ENCODE measurements at regions of chr11 and their contacts with region 1.

Region 1: DNA sequence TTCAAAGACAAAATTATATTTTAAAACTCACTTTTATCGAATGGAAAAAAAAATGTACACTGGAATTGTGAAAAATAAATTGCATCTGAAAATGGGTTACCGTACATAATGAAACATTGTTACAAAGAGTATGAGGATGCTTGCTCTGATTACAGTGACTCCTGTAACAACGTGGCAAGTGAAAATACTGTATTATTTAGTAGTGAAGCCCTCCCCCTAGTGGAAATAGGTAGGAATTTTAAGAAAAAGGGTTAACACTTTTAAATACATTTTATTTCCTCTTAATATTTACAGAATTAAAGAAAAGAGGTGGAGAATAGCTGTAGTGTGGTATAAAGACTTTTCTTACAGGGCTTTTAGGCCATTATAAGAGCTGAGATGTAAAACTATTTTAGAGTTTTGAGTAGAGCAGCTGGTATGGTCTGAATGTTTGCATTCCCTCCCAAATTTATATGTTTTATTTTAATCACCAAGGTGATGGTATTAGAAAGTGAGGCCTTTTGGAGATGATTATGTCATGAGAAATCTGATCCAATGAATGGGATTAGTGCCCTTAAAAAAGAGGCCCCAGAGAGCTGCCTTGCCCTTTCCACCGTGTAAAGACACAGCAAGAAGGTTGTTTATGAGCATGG is 25.2 kb downstream of the FAM76B start:
- DNase-seq: peak; percentile 54 to 65 (median 60)
- ATAC-seq: peak; percentile 81
- H3K4me3 ChIP-seq: no peak overlapping the region
- H3K27ac ChIP-seq: no peak overlapping the region
- H3K4me1 ChIP-seq: no peaks in the 10 kb centered on the region
- H3K27me3 ChIP-seq: no peaks in the 10 kb centered on the region
- CTCF ChIP-seq: peak; percentile 38 to 78 (median 54); a peak in 4 of 6 replicates
- EP300 ChIP-seq: no peak
- POLR2A ChIP-seq: no peak
- RAD21 ChIP-seq: peak; percentile 93 to 96

Region 2: DNA sequence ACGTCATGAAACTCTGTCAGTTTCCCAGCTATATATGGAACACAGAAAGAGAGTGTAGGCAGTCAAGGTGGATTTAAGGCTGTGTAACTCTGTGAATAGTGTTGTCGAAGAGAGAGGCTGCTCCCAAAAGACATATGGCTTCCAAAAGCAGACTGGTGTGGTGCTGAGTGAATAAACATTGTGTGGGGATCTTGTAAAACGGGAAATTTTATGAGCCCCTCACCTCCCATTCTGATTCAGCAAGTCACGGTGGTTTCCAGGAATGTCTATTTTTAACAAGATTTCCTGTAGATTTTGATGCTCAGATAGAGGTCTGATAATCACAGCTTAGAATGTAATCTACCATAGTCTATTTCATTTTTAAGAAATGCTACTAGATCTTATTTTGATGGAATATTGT is 601.3 kb before region 1 on chr11:
- CTCF ChIA-PET with region 1: no interaction called
- POLR2A ChIA-PET with region 1: no interaction called
- in situ Hi-C with region 1: loop called (anchors 5 kb)
- intact Hi-C with region 1: no loop called
- DNase-seq: no peak
- ATAC-seq: no peak
- H3K4me3 ChIP-seq: no peak overlapping the region
- H3K27ac ChIP-seq: no peak overlapping the region
- H3K4me1 ChIP-seq: no peaks in the 10 kb centered on the region
- H3K27me3 ChIP-seq: no peaks in the 10 kb centered on the region
- CTCF ChIP-seq: no peak
- EP300 ChIP-seq: no peak
- POLR2A ChIP-seq: no peak
- RAD21 ChIP-seq: no peak

Region 3: GRCh38 chr11:95364324-95365295 is 399.8 kb before region 1 on chr11:
- CTCF ChIA-PET with region 1: no interaction called
- POLR2A ChIA-PET with region 1: no interaction called
- in situ Hi-C with region 1: no loop called
- intact Hi-C with region 1: loop called (anchors 10 kb)
- DNase-seq: no peak
- ATAC-seq: no peak
- H3K4me3 ChIP-seq: no peak overlapping the region
- H3K27ac ChIP-seq: no peak overlapping the region
- H3K4me1 ChIP-seq: no peaks in the 10 kb centered on the region
- H3K27me3 ChIP-seq: peaks cover 0 to 6% of the 10 kb centered on the region in 2 experiments; a peak in 2 of 5 replicates
- CTCF ChIP-seq: no peak
- EP300 ChIP-seq: no peak
- POLR2A ChIP-seq: no peak
- RAD21 ChIP-seq: no peak

Region 4: GRCh38 chr11:95545116-95545875 is 219.1 kb before region 1 on chr11:
- CTCF ChIA-PET with region 1: no interaction called
- POLR2A ChIA-PET with region 1: interaction called, 3 read pairs
- in situ Hi-C with region 1: no loop called
- intact Hi-C with region 1: loop called (anchors 5 kb)
- DNase-seq: peak in 3 of 4 experiments; percentile 27 to 44 (median 29)
- ATAC-seq: peak; percentile 54
- H3K4me3 ChIP-seq: no peak overlapping the region
- H3K27ac ChIP-seq: no peak overlapping the region; the same call in 2 of the 3 replicates
- H3K4me1 ChIP-seq: peaks cover 3 to 51% of the 10 kb centered on the region in 2 experiments; a peak in 3 of 5 replicates
- H3K27me3 ChIP-seq: no peaks in the 10 kb centered on the region; a peak in 1 of 5 replicates
- CTCF ChIP-seq: peak in 1 of 3 experiments; percentile 36; a peak in 4 of 6 replicates
- EP300 ChIP-seq: no peak
- POLR2A ChIP-seq: no peak
- RAD21 ChIP-seq: no peak